B cell (primary cell): ENCODE measurements at regions of chr2 and their contacts with region 1.

Region 1: DNA sequence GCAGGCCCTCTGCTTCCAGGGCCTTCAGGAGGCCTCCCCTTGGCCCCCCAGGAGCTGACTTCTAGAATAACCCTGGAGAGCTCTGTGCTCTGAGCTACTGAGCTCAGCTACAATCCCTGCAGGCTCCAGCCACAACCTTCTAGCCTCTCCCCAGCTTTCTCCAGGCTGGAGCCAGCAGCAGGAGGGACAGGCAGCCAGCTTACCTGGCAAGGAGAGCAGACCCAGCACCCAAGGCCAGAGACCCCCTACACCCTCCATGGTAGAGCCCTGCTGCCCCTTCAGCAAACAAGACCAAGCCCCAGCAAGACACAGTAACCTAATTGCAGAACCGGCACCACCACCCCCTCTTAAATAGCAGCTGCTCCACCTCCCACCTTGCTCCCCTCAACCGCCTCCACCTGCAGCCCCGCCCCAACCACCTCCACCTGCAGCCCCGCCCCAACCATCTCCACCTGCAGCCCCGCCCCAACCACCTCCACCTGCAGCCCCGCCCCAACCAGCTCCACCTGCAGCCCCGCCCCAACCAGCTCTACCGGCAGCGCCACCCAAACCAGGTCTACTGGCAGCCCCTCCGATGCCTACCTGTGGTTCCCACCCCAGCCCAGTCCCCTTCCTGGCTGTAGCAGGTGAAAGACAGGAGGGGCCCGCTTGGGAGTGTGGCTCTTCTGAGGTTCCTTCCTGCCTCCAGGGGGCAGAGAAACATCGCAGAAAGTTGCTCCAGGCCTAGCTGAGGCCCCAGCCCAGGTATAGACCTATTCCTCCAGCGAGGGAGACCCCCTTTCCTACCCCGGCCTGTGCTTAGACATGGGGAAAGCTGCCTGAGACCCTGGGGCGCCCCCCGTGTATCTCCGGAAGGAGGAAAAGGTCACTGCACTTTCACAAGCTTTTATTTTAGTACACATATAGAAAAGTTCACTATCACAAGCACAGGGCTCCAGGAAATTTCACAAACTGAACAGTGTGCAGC is at the start of gene ASTL:
- DNase-seq: peak; percentile 81
- ATAC-seq: peak; percentile 63
- H3K4me3 ChIP-seq: no peak within 1 kb of the TSS
- H3K4me3 Mint-ChIP-seq: no peak within 1 kb of the TSS
- H3K27ac ChIP-seq: no peak within 1 kb of the TSS
- H3K27ac Mint-ChIP-seq: peak within 1 kb of the TSS; percentile 41
- H3K4me1 ChIP-seq: peaks cover 10 to 20% of the 10 kb centered on the region in 2 donors
- H3K4me1 Mint-ChIP-seq: peaks cover 27% of the 10 kb centered on the region
- H3K27me3 ChIP-seq: no peaks in the 10 kb centered on the region
- H3K27me3 Mint-ChIP-seq: no peaks in the 10 kb centered on the region
- CTCF ChIP-seq: peak; percentile 67
- total RNA-seq, gene ASTL: 0.41 and 0.59 TPM in 2 replicates

Region 2: DNA sequence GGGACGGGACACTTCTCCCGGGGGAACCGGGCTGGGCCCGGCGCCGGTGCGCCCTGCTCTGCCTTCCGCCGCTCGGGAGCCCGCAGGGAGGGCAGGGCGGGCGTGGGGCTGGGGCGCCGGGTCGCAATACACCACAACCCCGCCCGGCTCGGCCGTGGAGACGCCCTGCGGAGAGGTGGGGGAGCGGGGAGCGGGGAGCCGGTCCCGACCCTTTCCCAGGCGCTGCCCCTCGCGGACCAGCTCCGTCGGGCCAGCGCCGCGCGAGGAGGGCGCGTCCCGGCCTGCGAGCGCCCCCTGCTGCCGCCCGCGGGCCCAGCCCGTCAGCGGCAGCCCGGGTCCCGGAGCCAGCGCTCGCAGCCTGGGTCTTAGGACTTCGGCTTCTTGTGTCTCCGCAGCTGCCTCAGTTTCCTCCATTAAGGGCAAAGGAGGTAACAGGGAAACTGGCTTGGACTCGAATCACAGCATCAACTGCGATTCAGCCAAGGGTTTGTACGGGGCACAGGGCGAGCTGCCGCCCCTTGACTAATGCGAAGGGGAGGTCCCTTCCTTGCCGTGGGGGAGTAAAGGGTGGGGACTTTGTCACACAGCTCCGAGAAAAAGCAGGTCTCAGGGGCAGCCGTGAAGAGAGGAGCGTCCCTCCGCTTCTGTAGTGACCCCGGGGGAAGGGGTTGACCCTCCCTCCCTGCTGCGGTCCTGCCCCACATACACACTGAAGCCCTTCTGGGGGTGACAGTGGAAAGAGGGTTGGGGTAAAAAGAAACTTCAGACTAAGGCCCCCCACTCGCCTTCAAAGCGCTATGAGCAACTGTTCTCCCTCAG is 21.4 kb before region 1 on chr2:
- CTCF ChIA-PET with region 1: interaction called, 15 read pairs
- POLR2A ChIA-PET with region 1: interaction called, 5 read pairs
- intact Hi-C with region 1: no loop called
- DNase-seq: peak; percentile 82
- ATAC-seq: peak; percentile 79
- H3K4me3 ChIP-seq: peak overlapping the region in 4 of 5 experiments; percentile 19 to 61 (median 52)
- H3K4me3 Mint-ChIP-seq: peak overlapping the region; percentile 79
- H3K27ac ChIP-seq: no peak overlapping the region
- H3K27ac Mint-ChIP-seq: no peak overlapping the region
- H3K4me1 ChIP-seq: peaks cover 18 to 22% of the 10 kb centered on the region in 2 donors
- H3K4me1 Mint-ChIP-seq: peaks cover 26% of the 10 kb centered on the region
- H3K27me3 ChIP-seq: peaks cover 0 to 51% (median 11%) of the 10 kb centered on the region in 4 experiments
- H3K27me3 Mint-ChIP-seq: peaks cover 34% of the 10 kb centered on the region
- CTCF ChIP-seq: peak; percentile 92

Region 3: GRCh38 chr2:96157651-96158553 is 19.4 kb after region 1 on chr2:
- CTCF ChIA-PET with region 1: interaction called, 1,065 read pairs
- POLR2A ChIA-PET with region 1: interaction called, 47 read pairs
- intact Hi-C with region 1: no loop called
- DNase-seq: peak; percentile 76
- ATAC-seq: peak; percentile 74
- H3K4me3 ChIP-seq: peak overlapping the region in 1 of 5 experiments; percentile 6
- H3K4me3 Mint-ChIP-seq: peak overlapping the region; percentile 77
- H3K27ac ChIP-seq: peak overlapping the region; percentile 42 to 44
- H3K27ac Mint-ChIP-seq: peak overlapping the region; percentile 81
- H3K4me1 ChIP-seq: peaks cover 49 to 59% of the 10 kb centered on the region in 2 donors
- H3K4me1 Mint-ChIP-seq: peaks cover 74% of the 10 kb centered on the region
- H3K27me3 ChIP-seq: no peaks in the 10 kb centered on the region
- H3K27me3 Mint-ChIP-seq: no peaks in the 10 kb centered on the region
- CTCF ChIP-seq: no peak

Region 4: DNA sequence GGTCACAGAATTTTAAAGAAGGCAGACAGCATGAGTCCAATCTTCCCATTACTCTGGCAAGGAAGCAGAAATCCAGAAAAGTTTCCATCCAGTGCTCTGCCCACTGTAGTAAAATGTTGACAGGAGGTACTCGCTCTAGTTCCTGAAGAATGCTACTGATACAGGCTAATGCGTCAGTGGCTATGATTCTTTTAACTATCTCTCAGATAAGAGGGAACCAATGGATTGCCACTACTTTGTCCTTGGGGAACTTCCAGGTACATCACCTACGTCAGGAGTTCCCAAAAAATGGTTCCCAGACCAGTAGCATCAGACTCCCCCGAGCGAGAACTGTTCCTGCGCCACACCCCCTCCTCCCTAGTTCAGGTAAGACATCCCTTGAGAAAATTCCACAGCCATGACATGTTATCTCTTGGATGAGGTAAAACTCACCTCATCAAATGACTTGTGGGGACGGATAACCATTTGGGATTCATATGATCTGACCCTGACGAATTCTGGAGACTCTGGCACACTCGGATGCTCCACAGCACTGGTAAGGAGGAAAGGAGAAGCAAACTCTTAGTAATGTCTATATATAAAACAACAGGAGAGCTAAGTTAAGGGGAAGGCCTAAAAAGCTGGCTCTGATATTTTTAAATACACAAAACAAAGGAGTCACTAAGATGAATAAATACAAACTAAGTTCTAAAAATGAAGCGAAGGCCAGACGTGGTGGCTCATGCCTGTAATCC is 53.6 kb after region 1 on chr2:
- CTCF ChIA-PET with region 1: interaction called, 10 read pairs
- POLR2A ChIA-PET with region 1: no interaction called
- intact Hi-C with region 1: no loop called
- DNase-seq: no peak
- ATAC-seq: no peak
- H3K4me3 ChIP-seq: no peak overlapping the region
- H3K4me3 Mint-ChIP-seq: no peak overlapping the region
- H3K27ac ChIP-seq: no peak overlapping the region
- H3K27ac Mint-ChIP-seq: no peak overlapping the region
- H3K4me1 ChIP-seq: no peaks in the 10 kb centered on the region
- H3K4me1 Mint-ChIP-seq: peaks cover 7% of the 10 kb centered on the region
- H3K27me3 ChIP-seq: no peaks in the 10 kb centered on the region
- H3K27me3 Mint-ChIP-seq: no peaks in the 10 kb centered on the region
- CTCF ChIP-seq: no peak

Region 5: DNA sequence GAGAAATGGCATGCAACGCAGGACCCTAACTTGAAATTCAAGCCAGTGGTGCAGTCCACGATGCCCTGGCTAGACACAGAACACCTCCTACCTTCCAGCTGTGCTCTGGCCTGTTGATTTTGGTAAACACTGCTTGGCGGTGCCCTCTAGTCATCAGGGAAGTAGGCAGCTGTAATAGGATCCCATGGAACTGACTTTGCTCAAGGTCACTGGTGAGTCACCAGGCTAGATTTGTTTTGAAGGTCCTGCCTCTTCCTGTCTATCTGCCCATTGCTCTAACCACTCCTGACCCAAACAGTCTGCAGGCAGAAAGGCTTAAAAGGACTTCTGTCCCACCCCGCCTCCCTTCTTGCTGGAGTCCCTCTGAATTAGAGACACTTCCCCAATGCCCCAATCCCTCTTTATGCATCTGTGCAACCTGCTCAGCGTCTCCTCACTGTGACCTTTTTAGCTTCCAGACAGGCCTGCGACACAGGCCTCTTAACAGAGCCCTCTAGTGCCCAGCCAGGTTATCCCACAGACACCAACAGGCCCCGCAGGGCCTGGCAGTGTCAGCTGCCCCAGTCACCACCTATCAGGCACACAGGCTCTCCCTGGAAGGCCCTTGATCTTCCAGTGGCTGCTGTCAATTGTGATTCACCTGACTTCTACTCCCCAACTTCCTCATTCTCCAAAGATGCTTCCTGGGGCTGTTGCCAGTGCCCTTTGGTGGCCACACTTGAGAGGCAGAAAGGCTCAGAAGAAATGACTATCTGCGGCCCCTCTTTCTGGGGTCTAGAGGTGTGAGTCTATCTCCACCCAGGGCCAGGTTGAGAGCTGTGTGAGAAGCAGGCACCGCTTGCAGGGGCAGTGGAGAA is 122.2 kb after region 1 on chr2:
- CTCF ChIA-PET with region 1: interaction called, 36 read pairs
- POLR2A ChIA-PET with region 1: no interaction called
- intact Hi-C with region 1: loop called (anchors 2 kb)
- DNase-seq: peak; percentile 62
- ATAC-seq: peak; percentile 55
- H3K4me3 ChIP-seq: no peak overlapping the region
- H3K4me3 Mint-ChIP-seq: peak overlapping the region; percentile 64
- H3K27ac ChIP-seq: peak overlapping the region; percentile 44 to 64
- H3K27ac Mint-ChIP-seq: peak overlapping the region; percentile 92
- H3K4me1 ChIP-seq: peaks cover 65 to 75% of the 10 kb centered on the region in 2 donors
- H3K4me1 Mint-ChIP-seq: peaks cover 78% of the 10 kb centered on the region
- H3K27me3 ChIP-seq: no peaks in the 10 kb centered on the region
- H3K27me3 Mint-ChIP-seq: no peaks in the 10 kb centered on the region
- CTCF ChIP-seq: peak; percentile 29

Region 6: GRCh38 chr2:96734880-96735583 is 596.6 kb after region 1 on chr2:
- CTCF ChIA-PET with region 1: no interaction called
- POLR2A ChIA-PET with region 1: no interaction called
- intact Hi-C with region 1: no loop called
- DNase-seq: no peak
- ATAC-seq: no peak
- H3K4me3 ChIP-seq: no peak overlapping the region
- H3K4me3 Mint-ChIP-seq: no peak overlapping the region
- H3K27ac ChIP-seq: no peak overlapping the region
- H3K27ac Mint-ChIP-seq: no peak overlapping the region
- H3K4me1 ChIP-seq: peaks cover 12 to 15% of the 10 kb centered on the region in 2 donors
- H3K4me1 Mint-ChIP-seq: peaks cover 20% of the 10 kb centered on the region
- H3K27me3 ChIP-seq: no peaks in the 10 kb centered on the region
- H3K27me3 Mint-ChIP-seq: no peaks in the 10 kb centered on the region
- CTCF ChIP-seq: no peak